ENCODE measurements at regions of chr4 and their contacts with region 1.

Region 1: DNA sequence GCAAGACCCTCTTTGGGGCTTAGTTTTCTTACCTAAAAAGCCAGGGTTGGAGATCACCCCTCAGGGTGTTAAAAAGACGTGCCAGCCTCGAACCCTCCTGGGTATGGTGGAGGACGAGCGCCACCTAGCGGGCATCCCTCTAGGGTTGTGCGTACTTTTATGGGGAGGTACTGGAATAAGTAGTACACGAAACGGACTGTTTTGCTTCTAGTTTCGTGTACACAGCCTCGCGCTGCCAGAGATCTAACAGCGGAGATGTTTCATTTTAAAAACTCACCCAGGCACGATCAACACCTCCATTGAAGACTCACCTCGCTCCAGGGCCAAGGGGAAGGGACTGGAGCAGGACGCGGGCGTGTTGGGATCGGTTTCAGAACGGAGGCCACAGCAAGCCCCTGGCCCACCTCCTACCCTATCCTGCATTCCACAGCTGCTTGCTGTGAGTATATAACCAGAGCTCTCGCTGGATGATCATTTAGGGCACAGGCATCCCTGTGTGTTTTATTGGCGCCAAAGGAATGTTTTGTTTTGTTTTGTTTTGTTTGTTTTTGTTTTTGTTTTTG is 4.8 kb upstream of the NKX3-2 start:
- DNase-seq: peak; percentile 95
- H3K4me3 Mint-ChIP-seq: peak overlapping the region; percentile 80
- H3K27ac Mint-ChIP-seq: peak overlapping the region; percentile 9
- H3K4me1 Mint-ChIP-seq: peaks cover 27% of the 10 kb centered on the region
- H3K27me3 Mint-ChIP-seq: peaks cover 61% of the 10 kb centered on the region

Region 2: GRCh38 chr4:11765849-11766453 is 1783.1 kb before region 1 on chr4:
- intact Hi-C with region 1: loop called (anchors 5 kb)
- DNase-seq: peak; percentile 60
- H3K4me3 Mint-ChIP-seq: no peak overlapping the region
- H3K27ac Mint-ChIP-seq: no peak overlapping the region
- H3K4me1 Mint-ChIP-seq: no peaks in the 10 kb centered on the region
- H3K27me3 Mint-ChIP-seq: no peaks in the 10 kb centered on the region

Region 3: DNA sequence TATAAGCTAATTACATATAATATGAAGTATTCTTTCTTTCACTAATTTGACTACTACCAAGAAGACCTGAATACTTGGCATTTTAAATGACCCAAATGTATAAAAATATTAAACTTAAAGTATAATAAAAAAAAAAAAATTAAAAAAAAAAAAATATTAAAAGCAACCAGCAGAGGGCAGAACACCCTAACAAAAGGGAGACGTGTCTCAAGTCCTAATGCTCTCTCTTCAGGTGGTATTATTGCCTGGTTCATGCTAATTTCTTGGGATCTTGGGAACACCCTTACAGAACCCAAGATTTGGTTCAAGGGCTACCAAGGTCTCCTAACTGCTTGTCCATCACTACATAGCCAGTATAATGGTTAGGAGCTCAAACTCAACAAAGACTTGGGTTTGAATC is 819.7 kb before region 1 on chr4:
- intact Hi-C with region 1: loop called (anchors 1 kb)
- DNase-seq: peak; percentile 44
- H3K4me3 Mint-ChIP-seq: no peak overlapping the region
- H3K27ac Mint-ChIP-seq: no peak overlapping the region
- H3K4me1 Mint-ChIP-seq: no peaks in the 10 kb centered on the region
- H3K27me3 Mint-ChIP-seq: peaks cover 4% of the 10 kb centered on the region

Region 4: DNA sequence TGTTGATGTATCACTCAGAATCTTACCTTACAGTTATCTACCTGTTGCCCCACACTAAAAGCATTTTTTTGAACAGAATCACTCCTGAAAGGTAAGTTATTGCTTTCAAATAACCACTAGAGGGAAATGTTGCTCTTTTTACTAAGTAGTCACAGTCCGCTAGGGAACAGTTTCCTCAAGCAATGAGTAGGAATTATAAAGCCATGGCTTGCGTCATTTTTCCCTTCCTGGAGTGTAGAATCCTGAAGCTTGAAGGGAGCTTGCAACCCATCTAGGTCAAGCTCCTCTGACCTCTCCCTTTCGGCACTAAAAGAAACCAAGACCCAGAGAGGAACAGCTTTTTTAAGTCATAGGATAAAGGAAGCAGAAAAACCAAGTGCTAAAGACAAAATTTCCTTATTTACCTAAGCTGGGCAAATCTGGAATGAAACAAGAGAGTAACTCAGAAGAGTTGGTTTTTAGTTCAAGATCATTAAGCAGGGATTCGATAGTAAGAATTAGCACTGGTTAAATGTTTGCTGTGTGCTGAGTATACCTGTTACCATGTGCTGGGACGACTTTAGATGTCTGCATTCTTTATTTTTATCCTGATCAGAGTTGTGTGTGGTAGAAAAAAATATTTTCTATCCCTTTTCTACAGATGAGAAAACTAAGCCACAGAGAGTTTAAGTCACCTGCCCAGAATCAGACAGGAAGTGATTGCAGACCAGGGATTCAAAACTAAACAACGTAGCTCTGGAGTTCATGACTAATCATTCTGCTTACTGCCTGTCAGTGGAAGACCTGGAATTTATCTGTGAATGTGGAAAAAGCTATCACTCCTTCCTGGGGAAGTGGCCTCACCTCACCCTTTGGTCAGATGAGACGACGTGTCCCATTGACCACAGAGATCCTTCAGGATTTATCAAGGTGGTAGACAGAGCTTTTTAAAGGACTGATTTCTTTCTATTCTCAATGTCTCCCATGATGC is 696.4 kb before region 1 on chr4:
- intact Hi-C with region 1: loop called (anchors 1 kb)
- DNase-seq: no peak
- H3K4me3 Mint-ChIP-seq: no peak overlapping the region
- H3K27ac Mint-ChIP-seq: no peak overlapping the region
- H3K4me1 Mint-ChIP-seq: no peaks in the 10 kb centered on the region
- H3K27me3 Mint-ChIP-seq: no peaks in the 10 kb centered on the region

Region 5: GRCh38 chr4:13484122-13484748 is 64.8 kb before region 1 on chr4 and contains the start of gene RAB28:
- intact Hi-C with region 1: loop called (anchors 2 kb)
- DNase-seq: peak; percentile 98
- H3K4me3 Mint-ChIP-seq: peak within 1 kb of the TSS; percentile 96
- H3K27ac Mint-ChIP-seq: peak within 1 kb of the TSS; percentile 100
- H3K4me1 Mint-ChIP-seq: peaks cover 21% of the 10 kb centered on the region
- H3K27me3 Mint-ChIP-seq: peaks cover 14% of the 10 kb centered on the region
- total RNA-seq, gene RAB28: 19.5 and 20.5 TPM in 2 replicates

Region 6: DNA sequence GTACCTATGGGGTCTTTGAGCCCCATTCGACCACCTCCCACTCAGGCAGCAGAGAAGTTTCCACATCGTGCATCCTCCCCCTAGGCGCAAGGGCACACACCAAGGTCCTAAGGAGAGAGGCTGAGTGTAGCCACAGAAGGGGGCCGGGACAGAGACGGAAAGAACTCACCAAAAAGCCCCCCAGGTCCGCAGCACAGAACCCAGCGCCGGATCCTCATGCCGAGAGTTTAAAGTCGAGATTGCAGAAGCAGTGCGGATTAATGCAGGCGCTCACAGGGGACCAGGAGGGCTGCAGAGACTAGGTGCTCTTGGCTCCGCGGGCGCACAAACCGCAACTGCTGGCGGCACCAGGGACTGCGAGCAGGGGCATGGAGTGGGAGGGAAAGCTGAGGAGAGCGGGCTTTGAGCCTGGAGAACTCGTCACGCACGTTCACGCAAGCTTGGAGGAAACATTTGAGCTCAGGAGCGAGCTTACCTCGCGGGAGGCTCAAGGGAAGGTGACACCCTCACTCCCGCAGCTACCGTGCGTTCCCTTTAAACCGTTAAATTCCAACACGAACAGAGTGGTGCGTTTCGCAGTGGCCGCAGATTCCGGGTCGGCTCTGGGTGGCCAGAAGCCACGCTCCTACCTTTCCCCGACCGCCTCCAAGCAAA is 13.2 kb before region 1 on chr4:
- intact Hi-C with region 1: loop called (anchors 1 kb)
- DNase-seq: no peak
- H3K4me3 Mint-ChIP-seq: no peak overlapping the region
- H3K27ac Mint-ChIP-seq: peak overlapping the region; percentile 15
- H3K4me1 Mint-ChIP-seq: peaks cover 11% of the 10 kb centered on the region
- H3K27me3 Mint-ChIP-seq: peaks cover 88% of the 10 kb centered on the region

Region 7: DNA sequence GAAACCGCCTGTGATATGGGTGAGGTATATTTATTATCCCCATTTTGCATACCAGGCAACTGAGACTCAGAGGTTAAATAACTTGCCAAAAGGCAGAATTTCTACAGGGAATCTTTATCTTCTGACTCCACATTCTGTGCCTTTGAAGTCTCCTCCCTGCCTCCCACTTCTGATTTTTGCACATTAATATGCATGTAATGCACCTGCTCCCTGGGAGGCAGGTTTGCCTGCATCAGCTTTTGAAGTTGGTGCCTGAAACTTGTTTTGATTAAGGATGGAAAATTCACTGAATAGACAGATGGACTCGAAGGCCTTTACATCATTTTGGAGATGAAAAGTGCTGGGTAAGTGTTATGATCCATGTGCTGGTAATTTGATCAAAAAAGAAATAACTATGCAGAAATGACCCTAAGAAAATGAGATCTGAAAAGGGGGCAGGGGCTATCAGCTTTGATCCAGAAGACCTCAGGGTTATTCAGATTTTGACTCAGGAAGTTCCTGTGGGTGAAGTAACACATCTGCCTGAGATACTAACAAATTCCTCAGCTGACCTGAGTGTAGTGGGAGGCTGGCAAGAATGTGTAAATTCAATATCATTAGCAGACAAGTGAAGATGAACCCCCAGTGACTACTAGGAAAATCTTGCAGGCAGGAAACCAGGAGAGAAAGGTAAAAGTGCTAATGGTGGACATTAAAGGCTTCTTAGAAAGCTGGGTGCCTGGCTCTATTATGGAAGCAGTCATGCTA is 245.9 kb after region 1 on chr4:
- intact Hi-C with region 1: no loop called
- DNase-seq: no peak
- H3K4me3 Mint-ChIP-seq: no peak overlapping the region
- H3K27ac Mint-ChIP-seq: no peak overlapping the region
- H3K4me1 Mint-ChIP-seq: no peaks in the 10 kb centered on the region
- H3K27me3 Mint-ChIP-seq: no peaks in the 10 kb centered on the region